ENCODE measurements at regions of chr3 and their contacts with region 1.

Region 1: DNA sequence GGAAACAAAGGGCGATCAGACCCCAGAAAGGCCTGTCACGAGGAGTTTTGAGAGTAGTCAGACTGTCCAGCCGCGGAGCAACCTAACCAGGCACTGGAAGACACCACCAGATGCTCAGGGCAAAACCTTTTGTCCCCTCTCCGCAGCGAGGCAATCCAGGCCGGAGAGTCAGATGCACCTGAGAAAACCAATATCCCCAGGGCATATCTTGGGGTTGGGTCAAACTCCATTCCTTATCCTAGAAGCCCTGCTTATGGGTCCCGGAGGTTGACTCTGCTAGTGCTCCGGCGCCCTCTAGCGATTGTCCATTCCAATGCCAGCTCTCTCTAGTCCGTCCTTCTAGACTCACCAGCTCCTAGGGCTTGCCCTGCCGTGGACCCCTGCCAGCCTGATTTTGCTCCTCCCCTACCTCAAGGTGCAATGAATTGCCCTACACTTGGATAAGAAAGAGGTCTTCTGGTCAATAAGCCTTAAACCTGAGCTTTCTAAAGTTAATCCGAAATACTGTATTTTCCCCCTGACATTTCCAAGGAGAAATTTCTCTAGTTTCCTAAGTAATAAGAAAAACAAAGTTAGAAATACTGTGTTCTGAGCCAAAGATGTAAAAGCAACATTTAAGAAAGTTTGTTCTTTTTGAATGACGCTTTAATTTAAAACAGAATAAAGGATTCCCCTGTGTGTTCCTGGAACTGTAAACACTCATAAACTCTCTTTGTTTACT is 5.5 kb downstream of the CPNE4 start:
- DNase-seq: no peak
- ATAC-seq: peak; percentile 45
- H3K4me3 Mint-ChIP-seq: no peak overlapping the region
- H3K27ac Mint-ChIP-seq: no peak overlapping the region
- H3K4me1 Mint-ChIP-seq: peaks cover 2% of the 10 kb centered on the region
- H3K27me3 Mint-ChIP-seq: peaks cover 44% of the 10 kb centered on the region
- CTCF ChIP-seq: no peak

Region 2: GRCh38 chr3:131033480-131034080 is 995.8 kb before region 1 on chr3:
- CTCF ChIA-PET with region 1: interaction called, 5 read pairs
- POLR2A ChIA-PET with region 1: no interaction called
- intact Hi-C with region 1: loop called (anchors 1 kb)
- DNase-seq: no peak
- ATAC-seq: peak; percentile 60
- H3K4me3 Mint-ChIP-seq: no peak overlapping the region
- H3K27ac Mint-ChIP-seq: no peak overlapping the region
- H3K4me1 Mint-ChIP-seq: no peaks in the 10 kb centered on the region
- H3K27me3 Mint-ChIP-seq: no peaks in the 10 kb centered on the region
- CTCF ChIP-seq: peak; percentile 71

Region 3: DNA sequence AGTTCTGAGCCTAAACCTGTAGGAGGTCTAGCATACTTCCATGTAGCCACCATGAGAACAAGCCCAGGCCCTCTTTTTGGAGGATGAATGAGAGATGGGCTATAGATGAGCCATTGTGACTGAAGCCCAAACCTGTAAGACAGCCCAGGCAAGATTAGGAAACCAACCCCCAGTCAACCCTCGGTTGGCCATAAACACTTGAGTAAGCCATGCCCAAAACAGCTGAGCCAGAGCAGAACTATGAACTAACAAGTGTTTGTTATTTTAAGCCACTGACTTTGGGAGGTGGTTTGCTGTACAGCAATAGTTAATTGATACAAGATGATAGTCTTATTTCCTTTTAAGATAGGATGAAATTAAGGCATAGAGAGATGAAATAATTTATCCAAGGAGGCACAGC is 17.9 kb after region 1 on chr3:
- CTCF ChIA-PET with region 1: no interaction called
- POLR2A ChIA-PET with region 1: no interaction called
- intact Hi-C with region 1: no loop called
- DNase-seq: no peak
- ATAC-seq: no peak
- H3K4me3 Mint-ChIP-seq: no peak overlapping the region
- H3K27ac Mint-ChIP-seq: no peak overlapping the region
- H3K4me1 Mint-ChIP-seq: no peaks in the 10 kb centered on the region
- H3K27me3 Mint-ChIP-seq: no peaks in the 10 kb centered on the region
- CTCF ChIP-seq: no peak

Region 4: DNA sequence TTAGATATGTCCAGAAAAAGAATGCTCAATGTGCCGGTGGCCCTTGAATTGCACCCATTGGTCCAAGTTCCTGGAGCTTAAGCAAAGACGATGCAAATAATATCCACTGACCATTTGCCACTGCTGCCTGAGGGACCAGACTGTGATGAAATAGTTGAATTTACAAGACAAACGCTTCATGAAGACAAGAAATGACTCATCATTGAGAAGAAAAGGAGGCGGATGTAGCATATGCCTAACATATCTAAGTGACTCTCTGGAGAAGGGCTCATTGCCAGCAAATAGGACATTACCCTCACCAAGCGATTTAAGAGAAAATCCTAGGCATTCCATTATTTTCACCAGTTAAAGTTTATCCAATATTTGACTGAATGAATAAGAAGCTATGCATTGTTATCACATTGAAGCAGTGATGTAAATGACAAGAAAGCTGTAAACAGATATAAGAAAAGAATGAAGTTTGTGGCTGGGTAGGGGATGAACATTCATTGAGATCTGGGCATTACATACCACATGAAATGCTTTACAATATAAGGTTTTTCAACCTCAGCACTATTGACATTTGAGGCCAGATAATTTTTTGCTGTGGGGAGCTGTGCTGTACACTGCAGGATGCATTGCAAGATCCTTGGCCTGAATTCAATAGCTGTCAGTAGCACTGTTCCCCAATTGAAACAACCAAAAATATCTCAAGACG is 54.4 kb after region 1 on chr3:
- CTCF ChIA-PET with region 1: no interaction called
- POLR2A ChIA-PET with region 1: no interaction called
- intact Hi-C with region 1: no loop called
- DNase-seq: no peak
- ATAC-seq: no peak
- H3K4me3 Mint-ChIP-seq: no peak overlapping the region
- H3K27ac Mint-ChIP-seq: no peak overlapping the region
- H3K4me1 Mint-ChIP-seq: no peaks in the 10 kb centered on the region
- H3K27me3 Mint-ChIP-seq: no peaks in the 10 kb centered on the region
- CTCF ChIP-seq: no peak

Region 5: GRCh38 chr3:132135628-132136333 is 106.4 kb after region 1 on chr3:
- CTCF ChIA-PET with region 1: no interaction called
- POLR2A ChIA-PET with region 1: no interaction called
- intact Hi-C with region 1: no loop called
- DNase-seq: no peak
- ATAC-seq: no peak
- H3K4me3 Mint-ChIP-seq: no peak overlapping the region
- H3K27ac Mint-ChIP-seq: no peak overlapping the region
- H3K4me1 Mint-ChIP-seq: no peaks in the 10 kb centered on the region
- H3K27me3 Mint-ChIP-seq: peaks cover 5% of the 10 kb centered on the region
- CTCF ChIP-seq: no peak

Measured in activated B cell treated with CpG ODN at 0.5 μM for 24 hours (primary cell).